ENCODE measurements at regions of chr16 and their contacts with region 1.

Region 1: GRCh38 chr16:75256696-75257343 is 5.4 kb upstream of the BCAR1 start:
- DNase-seq: no peak

Region 2: DNA sequence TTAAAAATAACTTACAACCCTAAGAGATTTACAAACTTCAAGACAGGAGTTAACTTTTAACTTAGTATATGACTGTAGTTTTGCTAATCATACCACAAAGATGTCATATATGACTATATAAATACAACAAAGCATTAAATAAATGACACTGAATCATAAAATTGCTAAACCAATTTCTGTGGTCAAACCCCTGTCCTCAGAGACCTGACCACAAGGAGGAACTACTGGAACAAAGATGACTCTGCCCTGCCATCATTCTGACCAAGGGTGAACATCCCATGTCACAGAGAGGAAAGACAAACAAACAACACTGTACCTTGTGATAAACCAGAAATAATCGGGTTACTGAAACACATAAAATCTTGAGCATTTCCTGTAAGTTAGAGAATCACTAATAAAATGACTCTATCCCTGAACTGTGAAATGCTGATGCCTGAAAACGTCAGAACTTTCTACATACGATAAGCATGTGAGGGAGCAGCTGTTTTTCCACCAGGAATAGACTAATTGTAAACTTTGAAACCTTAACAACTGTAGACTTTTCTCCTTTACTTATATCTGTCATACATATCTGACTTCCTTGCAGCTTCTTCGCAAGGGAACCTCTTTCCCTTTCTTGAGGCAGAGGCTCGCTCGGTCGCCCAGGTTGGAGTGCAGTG is 319.8 kb before region 1 on chr16:
- intact Hi-C with region 1: no loop called
- DNase-seq: no peak

Region 3: GRCh38 chr16:75296606-75297005 is 39.8 kb after region 1 on chr16:
- intact Hi-C with region 1: loop called (anchors 5 to 10 kb)
- DNase-seq: no peak

Measured in posterior vena cava (tissue), 2 donors.